HEK293 (cell line): ENCODE measurements at regions of chr5 and their contacts with region 1.

Region 1: GRCh38 chr5:132866342-132867045 is at the starts of genes GDF9 and UQCRQ:
- H3K4me3 ChIP-seq: peak within 1 kb of the TSS; percentile 96
- H3K27ac ChIP-seq: peak within 1 kb of the TSS; percentile 50
- H3K4me1 ChIP-seq: peaks cover 6% of the 10 kb centered on the region; the same call in 1 of the 2 replicates
- CTCF ChIP-seq: peak; percentile 85

Region 2: DNA sequence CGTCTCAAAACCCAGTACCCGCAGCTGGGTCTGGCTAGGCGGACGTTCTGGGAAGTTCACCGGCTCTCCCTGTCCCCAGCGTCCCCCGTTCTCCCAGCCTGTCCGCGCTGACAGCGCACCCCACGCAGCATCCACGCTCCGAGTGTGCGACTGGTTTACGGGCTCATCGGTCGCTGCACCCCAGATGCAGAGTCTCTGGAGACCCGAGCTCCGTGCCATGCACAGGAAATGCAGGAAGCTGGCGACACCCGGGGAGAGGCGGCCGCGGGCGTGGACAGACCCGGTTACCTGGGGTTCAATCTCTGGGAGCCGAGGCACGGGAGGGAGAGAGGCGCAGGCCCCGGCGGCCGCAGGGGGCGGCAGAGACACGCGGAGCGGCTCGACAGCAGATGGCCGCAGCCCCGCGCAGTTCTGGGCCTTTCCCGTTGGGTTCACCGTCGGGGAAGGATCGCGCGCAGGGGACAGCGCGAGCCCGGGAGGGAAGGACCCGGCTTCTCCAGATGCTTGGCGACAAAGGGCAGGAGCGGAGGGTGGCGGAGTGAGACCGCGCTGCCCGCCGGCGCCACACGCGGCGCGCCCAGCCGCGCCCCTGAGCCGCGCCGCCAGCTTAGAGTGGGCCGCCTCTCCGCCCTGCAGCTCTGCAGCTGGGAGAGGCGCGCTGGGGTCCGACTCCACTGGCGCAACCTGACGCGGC is 36.6 kb before region 1 on chr5:
- CTCF ChIA-PET with region 1: interaction called, 6 read pairs
- POLR2A ChIA-PET with region 1: interaction called, 10 read pairs
- H3K4me3 ChIP-seq: peak overlapping the region; percentile 74
- H3K27ac ChIP-seq: peak overlapping the region; percentile 78; the same call in 1 of the 2 replicates
- H3K4me1 ChIP-seq: no peaks in the 10 kb centered on the region
- CTCF ChIP-seq: peak; percentile 96

Region 3: DNA sequence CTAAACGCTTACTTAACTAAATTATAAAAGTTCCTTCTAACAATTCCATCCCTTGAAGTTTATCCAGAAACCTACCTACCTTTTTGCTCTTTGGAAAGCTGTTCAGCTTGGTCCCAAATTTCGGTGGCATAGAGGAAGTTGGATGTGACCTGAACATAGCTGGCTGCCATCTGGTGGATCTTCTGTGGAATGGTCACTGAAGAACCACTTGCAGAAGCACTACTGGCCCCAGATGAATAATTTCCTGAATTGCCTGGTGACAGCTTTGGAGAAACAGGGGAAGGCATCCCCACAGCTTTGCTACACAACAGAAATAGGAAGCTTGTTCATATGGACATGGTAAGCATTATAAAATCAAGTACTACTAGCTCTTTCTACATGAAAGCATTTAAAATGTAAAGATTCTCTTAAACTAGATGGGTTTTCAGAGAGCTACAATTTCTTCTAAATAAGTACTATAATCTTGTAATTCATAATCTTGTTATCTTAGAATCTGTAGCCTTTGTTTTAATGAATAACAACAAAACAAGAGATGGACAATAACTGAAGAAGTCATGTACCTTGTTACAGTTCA is 16.9 kb after region 1 on chr5:
- CTCF ChIA-PET with region 1: interaction called, 11 read pairs
- POLR2A ChIA-PET with region 1: interaction called, 8 read pairs
- H3K4me3 ChIP-seq: no peak overlapping the region
- H3K27ac ChIP-seq: no peak overlapping the region
- H3K4me1 ChIP-seq: peaks cover under 1% of the 10 kb centered on the region; the same call in 1 of the 2 replicates
- CTCF ChIP-seq: 0 out of 2 replicates have a peak, but pooled peaks have one; percentile 34

Region 4: DNA sequence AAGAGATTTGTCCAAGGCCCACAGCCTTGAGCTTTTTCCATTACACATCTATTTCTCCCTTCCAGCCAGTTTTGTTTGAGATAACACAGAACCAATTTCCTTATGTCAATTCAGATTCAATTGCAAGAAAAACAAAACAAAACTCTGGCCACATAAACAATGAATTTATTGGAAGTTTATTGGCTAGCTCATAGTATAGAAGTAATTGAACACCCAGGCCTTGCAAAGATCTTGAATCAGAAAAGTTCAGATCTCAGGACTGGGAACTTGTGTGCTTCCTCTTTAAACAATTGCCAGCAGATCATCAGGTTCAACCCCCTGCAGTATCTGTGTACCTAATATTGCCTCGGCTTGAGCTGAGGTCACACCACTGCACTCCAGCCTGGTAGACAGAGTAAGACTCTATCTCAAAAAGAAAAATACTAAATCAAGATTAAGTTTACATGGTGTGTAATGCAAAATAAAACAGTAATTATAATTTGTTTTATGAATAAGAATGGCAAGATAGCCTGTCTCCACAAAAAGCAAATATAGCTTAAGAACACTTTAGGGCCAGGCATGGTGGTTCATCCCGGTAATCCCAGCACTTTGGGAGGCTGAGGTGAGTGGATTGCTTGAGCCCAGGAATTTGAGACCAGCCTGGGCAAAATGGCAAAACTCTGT is 164.0 kb after region 1 on chr5:
- CTCF ChIA-PET with region 1: no interaction called
- POLR2A ChIA-PET with region 1: interaction called, 12 read pairs
- H3K4me3 ChIP-seq: no peak overlapping the region
- H3K27ac ChIP-seq: peak overlapping the region; percentile 56
- H3K4me1 ChIP-seq: peaks cover 12% of the 10 kb centered on the region
- CTCF ChIP-seq: no peak

Region 5: DNA sequence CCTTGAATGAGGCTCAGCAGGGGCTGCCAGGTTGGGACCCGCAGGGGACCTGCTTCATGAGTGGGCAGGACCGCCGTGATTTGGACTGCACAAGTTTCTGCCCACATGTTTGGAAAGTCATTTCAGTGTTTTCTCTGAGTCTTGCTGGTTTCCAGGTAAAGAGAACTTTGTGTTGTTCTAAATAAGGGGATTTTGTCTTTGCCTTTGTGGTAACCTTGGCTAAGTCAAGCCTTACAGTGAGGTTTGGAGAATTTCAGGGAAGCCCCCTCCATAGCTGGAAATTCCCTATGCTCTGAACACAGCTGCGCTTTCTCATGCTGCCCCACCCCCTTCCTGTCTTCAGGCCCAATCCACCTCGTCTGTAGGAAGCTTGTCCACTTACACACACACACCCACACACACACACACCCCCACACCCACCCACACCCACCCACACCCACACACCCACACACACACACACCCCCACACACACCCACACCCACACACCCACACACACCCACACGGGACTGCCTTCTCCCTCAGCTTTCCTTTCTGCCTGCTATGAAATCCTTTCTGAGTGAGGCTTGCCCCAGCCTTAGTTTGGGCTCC is 455.4 kb after region 1 on chr5:
- CTCF ChIA-PET with region 1: no interaction called
- POLR2A ChIA-PET with region 1: no interaction called
- H3K4me3 ChIP-seq: no peak overlapping the region
- H3K27ac ChIP-seq: no peak overlapping the region
- H3K4me1 ChIP-seq: no peaks in the 10 kb centered on the region
- CTCF ChIP-seq: no peak